A549 (cell line): ENCODE measurements at regions of chr19 and their contacts with region 1.

Region 1: DNA sequence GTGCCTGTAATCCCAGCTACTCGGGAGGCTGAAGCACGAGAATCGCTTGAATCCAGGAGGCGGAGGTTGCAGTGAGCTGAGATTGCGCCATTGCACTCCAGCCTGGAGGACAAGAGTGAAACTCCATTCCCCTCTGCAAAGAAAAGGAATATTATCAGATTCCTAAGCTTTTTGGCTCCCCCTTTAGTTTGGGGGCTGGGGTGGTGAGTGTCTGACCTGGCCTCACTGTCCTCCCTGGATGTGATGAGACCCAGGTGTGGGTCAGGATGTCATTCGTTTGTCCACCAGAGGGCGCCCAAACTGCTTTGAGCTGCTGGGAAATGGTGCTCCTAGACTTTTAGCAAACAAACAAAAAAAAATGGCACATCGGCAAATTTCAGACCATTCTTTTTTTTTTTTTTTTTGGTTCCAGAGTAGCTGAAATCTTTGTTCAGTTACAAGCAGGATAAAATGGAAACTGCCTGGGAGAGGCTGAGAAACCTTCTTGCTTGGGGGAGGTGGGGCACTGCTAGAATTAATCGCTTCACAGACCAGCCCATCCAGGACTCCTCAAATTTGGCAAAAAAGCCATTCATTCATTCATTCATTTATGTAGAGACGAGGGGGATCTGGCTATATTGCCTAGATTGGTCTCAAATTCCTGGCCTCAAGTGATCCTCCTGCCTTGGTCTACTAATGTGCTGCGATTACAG is 29.4 kb downstream of the SPC24 start:
- DNase-seq: peak; percentile 38 to 78
- ATAC-seq: peak; percentile 80 to 87
- H3K4me3 ChIP-seq: no peak overlapping the region
- H3K27ac ChIP-seq: no peak overlapping the region
- H3K4me1 ChIP-seq: peaks cover 9% of the 10 kb centered on the region; the same call in 2 of the 3 replicates
- CTCF ChIP-seq: peak; percentile 63
- EP300 ChIP-seq: no peak
- POLR2A ChIP-seq: no peak
- RAD21 ChIP-seq: peak; percentile 54 to 58; a peak in 4 of 5 replicates

Region 2: DNA sequence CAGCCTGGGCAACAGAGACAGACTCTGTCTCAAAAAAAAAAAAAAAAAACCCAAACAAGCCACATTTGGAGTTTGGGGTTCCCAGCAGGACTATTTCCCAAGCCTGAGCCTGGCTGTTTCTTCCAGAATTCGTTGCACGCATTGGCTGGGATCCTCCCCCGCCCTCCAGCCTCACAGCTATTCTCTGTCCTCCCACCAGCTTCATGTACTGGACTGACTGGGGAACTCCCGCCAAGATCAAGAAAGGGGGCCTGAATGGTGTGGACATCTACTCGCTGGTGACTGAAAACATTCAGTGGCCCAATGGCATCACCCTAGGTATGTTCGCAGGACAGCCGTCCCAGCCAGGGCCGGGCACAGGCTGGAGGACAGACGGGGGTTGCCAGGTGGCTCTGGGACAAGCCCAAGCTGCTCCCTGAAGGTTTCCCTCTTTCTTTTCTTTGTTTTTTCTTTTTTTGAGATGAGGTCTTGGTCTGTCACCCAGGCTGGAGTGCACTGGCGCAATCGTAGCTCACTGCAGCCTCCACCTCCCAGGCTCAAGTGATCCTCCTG is 10.2 kb before region 1 on chr19:
- CTCF ChIA-PET with region 1: interaction called, 11 read pairs
- POLR2A ChIA-PET with region 1: no interaction called
- DNase-seq: no peak
- ATAC-seq: 0 out of 6 replicates have a peak, but pooled peaks of 1 of the 2 experiments have one; percentile 16
- H3K4me3 ChIP-seq: no peak overlapping the region
- H3K27ac ChIP-seq: no peak overlapping the region
- H3K4me1 ChIP-seq: no peaks in the 10 kb centered on the region
- CTCF ChIP-seq: no peak
- EP300 ChIP-seq: no peak
- POLR2A ChIP-seq: no peak
- RAD21 ChIP-seq: no peak

Region 3: GRCh38 chr19:11203194-11204075 is 77.3 kb after region 1 on chr19:
- CTCF ChIA-PET with region 1: interaction called, 31 read pairs
- POLR2A ChIA-PET with region 1: interaction called, 9 read pairs
- DNase-seq: peak; percentile 64 to 72
- ATAC-seq: peak; percentile 79 to 81
- H3K4me3 ChIP-seq: no peak overlapping the region
- H3K27ac ChIP-seq: peak overlapping the region; percentile 93 to 98
- H3K4me1 ChIP-seq: peaks cover 35% of the 10 kb centered on the region
- CTCF ChIP-seq: peak; percentile 80
- EP300 ChIP-seq: no peak
- POLR2A ChIP-seq: no peak
- RAD21 ChIP-seq: peak; percentile 83 to 96